HepG2 (cell line): ENCODE measurements at regions of chr11 and their contacts with region 1.

Region 1: DNA sequence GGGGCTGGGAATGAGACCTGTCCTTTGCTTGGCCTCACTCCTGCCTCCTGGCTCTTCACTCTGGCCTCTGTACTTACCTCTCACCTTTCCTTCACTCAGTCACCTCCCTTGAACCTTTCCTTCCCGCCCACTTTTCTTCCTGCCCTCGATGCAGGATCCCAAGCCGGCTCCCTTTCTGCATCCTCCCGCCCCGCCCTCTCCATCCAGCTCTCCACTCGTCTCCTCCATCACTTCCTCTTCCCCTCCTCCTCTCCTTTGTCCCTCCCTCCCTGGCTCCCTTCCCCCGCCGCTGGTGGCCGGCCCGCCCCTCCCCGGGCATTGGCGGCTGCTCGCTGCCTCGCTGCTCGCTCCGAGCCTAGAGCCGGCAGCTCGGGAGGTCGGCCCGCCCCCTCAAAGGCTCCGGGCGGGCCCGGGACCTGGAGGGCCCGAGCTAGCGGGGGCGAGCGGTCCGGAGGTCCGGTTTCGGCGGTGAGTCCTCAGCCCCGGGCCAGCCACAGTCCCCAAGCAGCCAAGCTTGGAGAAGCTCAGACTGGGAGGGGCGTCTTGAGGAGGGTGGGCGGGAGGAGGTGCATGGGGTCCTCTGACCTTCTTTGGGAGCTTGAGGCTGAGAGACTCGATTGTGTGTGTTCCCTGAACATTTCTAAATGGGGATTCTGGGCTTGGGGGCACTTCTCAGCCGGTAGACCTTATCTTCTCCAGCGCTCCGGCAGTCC is 13.8 kb downstream of the PHLDB1 start:
- DNase-seq: peak; percentile 85
- ATAC-seq: peak; percentile 80
- H3K4me3 ChIP-seq: peak overlapping the region; percentile 81 to 97 (median 87)
- H3K27ac ChIP-seq: peak overlapping the region; percentile 95
- H3K4me1 ChIP-seq: peaks cover 57% of the 10 kb centered on the region
- H3K27me3 ChIP-seq: no peaks in the 10 kb centered on the region; a peak in 1 of 5 replicates
- CTCF ChIP-seq: no peak; the same call in 1 of the 2 replicates
- EP300 ChIP-seq: no peak
- POLR2A ChIP-seq: peak in 1 of 2 experiments; percentile 23; a peak in 2 of 4 replicates
- RAD21 ChIP-seq: no peak

Region 2: GRCh38 chr11:117959438-117960149 is 661.6 kb before region 1 on chr11:
- CTCF ChIA-PET with region 1: no interaction called
- POLR2A ChIA-PET with region 1: no interaction called
- in situ Hi-C with region 1: no loop called
- intact Hi-C with region 1: no loop called
- DNase-seq: no peak
- ATAC-seq: no peak
- H3K4me3 ChIP-seq: no peak overlapping the region
- H3K27ac ChIP-seq: no peak overlapping the region
- H3K4me1 ChIP-seq: 0 out of 2 replicates have a peak, but pooled peaks cover 3% of the 10 kb centered on the region
- H3K27me3 ChIP-seq: no peaks in the 10 kb centered on the region
- CTCF ChIP-seq: no peak
- EP300 ChIP-seq: no peak
- POLR2A ChIP-seq: no peak
- RAD21 ChIP-seq: no peak

Region 3: GRCh38 chr11:118572061-118572980 is 48.9 kb before region 1 on chr11 and contains the start of gene ARCN1:
- CTCF ChIA-PET with region 1: no interaction called
- POLR2A ChIA-PET with region 1: interaction called, 17 read pairs
- in situ Hi-C with region 1: no loop called
- intact Hi-C with region 1: no loop called
- DNase-seq: peak; percentile 61
- ATAC-seq: peak; percentile 87
- H3K4me3 ChIP-seq: peak within 1 kb of the TSS; percentile 68 to 97 (median 94)
- H3K27ac ChIP-seq: peak within 1 kb of the TSS; percentile 95
- H3K4me1 ChIP-seq: peaks cover 52% of the 10 kb centered on the region
- H3K27me3 ChIP-seq: no peaks in the 10 kb centered on the region; a peak in 1 of 5 replicates
- CTCF ChIP-seq: peak; percentile 24
- EP300 ChIP-seq: no peak
- POLR2A ChIP-seq: peak; percentile 86 to 92
- RAD21 ChIP-seq: peak; percentile 18; the same call in 1 of the 2 replicates
- total RNA-seq, gene ARCN1: 148 and 215 TPM in 2 replicates

Region 4: DNA sequence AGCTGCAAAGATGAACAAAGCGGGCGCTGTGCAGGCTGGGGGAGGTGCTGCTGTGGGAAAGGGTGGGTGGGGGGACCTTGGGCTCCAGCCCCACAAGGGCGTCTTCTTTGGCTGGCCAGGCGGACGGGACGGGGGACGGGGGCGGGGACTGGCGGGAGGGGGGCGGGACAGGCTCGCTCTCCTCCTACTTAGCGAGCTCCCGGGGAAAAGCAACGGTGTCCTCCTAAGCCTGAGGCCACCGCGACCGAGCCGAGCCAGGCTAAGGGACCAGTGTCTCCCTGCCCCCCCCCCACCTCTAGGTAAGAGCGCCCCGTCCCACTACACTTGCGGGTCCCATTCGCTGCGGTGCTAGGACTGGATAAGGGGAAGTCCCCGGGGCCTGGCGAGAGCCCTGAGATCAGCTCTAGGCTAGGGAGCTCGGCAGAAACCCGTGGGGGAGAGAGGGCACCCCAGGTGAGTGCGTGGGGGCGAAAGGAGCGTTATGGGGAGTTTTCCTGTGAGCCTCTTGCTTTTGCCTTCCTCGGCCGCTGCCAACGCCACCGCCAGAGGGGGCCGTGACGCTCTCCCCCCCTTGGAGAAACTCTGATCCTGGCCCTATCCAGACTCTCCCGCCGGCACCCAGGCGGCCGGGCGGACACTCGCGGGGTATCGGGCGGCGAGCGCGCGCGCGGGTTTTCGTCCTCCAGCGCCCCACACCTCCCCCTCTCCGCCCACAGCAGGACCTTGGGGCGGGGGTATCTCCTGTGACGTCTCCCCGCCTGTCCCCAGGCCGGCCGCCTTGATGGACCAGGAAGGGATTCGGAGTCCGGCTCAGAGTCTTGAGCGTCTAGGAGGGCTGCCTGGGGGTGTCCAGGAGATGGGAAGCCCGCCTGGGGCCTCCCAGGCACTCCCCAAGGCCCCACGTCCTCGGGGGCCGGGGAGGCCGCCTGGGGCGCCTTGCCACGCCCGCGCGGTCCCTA is 13.5 kb before region 1 on chr11 and contains the start of gene PHLDB1:
- CTCF ChIA-PET with region 1: no interaction called
- POLR2A ChIA-PET with region 1: interaction called, 83 read pairs
- in situ Hi-C with region 1: no loop called
- intact Hi-C with region 1: no loop called
- DNase-seq: peak; percentile 45
- ATAC-seq: peak; percentile 68
- H3K4me3 ChIP-seq: peak within 1 kb of the TSS; percentile 65 to 84 (median 81)
- H3K27ac ChIP-seq: no peak within 1 kb of the TSS
- H3K4me1 ChIP-seq: peaks cover 39% of the 10 kb centered on the region
- H3K27me3 ChIP-seq: peaks cover 0 to 6% of the 10 kb centered on the region in 2 experiments; a peak in 1 of 5 replicates
- CTCF ChIP-seq: peak; percentile 72
- EP300 ChIP-seq: no peak
- POLR2A ChIP-seq: no peak
- RAD21 ChIP-seq: no peak
- total RNA-seq, gene PHLDB1: 9.9 and 13.8 TPM in 2 replicates

Region 5: GRCh38 chr11:118634431-118635236 is 13.4 kb after region 1 on chr11:
- CTCF ChIA-PET with region 1: no interaction called
- POLR2A ChIA-PET with region 1: interaction called, 29 read pairs
- in situ Hi-C with region 1: no loop called
- intact Hi-C with region 1: no loop called
- DNase-seq: peak; percentile 41
- ATAC-seq: peak; percentile 88
- H3K4me3 ChIP-seq: peak overlapping the region; percentile 12 to 46 (median 19); a peak in 2 of 6 replicates
- H3K27ac ChIP-seq: no peak overlapping the region
- H3K4me1 ChIP-seq: peaks cover 9% of the 10 kb centered on the region
- H3K27me3 ChIP-seq: no peaks in the 10 kb centered on the region
- CTCF ChIP-seq: peak; percentile 62
- EP300 ChIP-seq: no peak
- POLR2A ChIP-seq: no peak
- RAD21 ChIP-seq: no peak

Region 6: DNA sequence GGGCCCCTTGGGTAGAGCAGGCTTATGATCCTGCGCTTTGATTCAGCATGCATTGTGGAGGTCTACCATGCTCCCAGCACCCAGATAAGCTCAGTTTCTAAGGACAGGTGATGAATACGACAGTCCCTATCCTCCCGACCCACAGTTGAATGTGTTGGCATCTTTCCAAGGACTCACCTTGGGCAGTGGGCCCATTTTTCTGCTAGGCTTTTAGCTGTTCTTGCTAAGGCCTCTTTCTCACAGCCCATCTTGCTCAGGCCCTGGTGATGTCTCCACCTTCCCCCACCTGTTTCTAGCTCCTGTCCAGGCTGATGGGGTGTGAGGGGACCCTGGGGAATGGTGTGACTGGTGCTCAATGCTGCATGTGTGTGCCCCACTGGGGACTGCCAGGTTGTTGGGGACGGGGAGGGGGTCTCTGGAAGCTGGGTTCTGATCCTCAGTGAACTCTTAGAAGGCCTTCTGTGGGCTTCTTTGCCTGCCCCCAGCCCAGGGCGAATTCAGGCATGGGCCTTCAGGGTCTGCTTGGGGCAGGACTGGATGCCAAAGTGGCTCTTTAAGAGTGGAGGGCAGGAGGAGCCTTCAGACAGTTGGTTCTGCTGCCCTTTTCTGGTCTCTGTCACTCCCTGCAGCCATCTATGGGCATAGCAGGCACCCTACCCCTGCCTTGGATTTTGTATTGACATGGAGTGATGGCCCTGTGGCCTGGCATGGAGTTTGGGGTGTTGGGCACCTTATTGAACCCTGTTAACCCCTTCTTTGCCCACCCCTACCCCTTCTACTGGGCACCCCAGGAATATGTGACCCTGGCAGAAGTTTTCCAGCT is 19.3 kb after region 1 on chr11:
- CTCF ChIA-PET with region 1: no interaction called
- POLR2A ChIA-PET with region 1: interaction called, 29 read pairs
- in situ Hi-C with region 1: no loop called
- intact Hi-C with region 1: no loop called
- DNase-seq: no peak
- ATAC-seq: peak; percentile 17; the same call in 2 of the 3 replicates
- H3K4me3 ChIP-seq: no peak overlapping the region
- H3K27ac ChIP-seq: no peak overlapping the region
- H3K4me1 ChIP-seq: no peaks in the 10 kb centered on the region
- H3K27me3 ChIP-seq: no peaks in the 10 kb centered on the region
- CTCF ChIP-seq: peak; percentile 36; the same call in 1 of the 2 replicates
- EP300 ChIP-seq: no peak
- POLR2A ChIP-seq: no peak
- RAD21 ChIP-seq: no peak

Region 7: DNA sequence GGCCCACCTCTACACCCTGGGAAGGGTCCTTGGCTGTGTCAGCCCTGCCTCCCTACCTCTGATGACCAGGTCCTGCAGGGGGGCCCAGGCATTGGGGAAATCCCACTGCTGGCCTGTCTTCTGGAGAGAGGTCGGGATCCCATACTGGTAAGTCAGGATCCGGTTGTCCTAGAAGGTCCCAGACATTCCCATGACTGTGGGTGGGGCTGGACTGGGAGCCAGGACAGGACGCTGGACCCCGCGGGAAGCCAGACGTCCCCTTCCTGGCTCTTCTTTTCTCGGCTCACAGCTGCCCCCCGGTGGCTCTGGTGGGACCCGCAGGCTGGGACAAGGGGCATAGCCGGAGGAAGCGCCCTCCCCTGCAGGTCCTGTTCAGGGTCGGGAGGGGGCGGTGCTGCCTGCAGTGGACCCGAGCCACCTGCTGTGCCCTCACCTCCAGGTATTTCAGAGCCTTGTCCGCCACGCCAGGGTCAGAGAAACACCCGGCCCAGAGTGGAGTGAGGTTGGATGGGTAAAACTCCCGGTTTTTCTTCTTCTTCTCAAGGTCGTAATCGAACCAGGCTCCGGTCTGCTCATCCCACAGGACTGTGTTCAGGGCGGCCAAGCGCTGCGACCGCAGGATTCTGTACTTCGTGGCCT is 38.2 kb after region 1 on chr11:
- CTCF ChIA-PET with region 1: no interaction called
- POLR2A ChIA-PET with region 1: interaction called, 12 read pairs
- in situ Hi-C with region 1: no loop called
- intact Hi-C with region 1: loop called (anchors 5 kb)
- DNase-seq: peak; percentile 82
- ATAC-seq: peak; percentile 90
- H3K4me3 ChIP-seq: peak overlapping the region in 2 of 3 experiments; percentile 25 to 53; a peak in 2 of 6 replicates
- H3K27ac ChIP-seq: no peak overlapping the region
- H3K4me1 ChIP-seq: peaks cover 35% of the 10 kb centered on the region
- H3K27me3 ChIP-seq: no peaks in the 10 kb centered on the region
- CTCF ChIP-seq: peak; percentile 99
- EP300 ChIP-seq: 0 out of 4 replicates have a peak, but pooled peaks of 1 of the 2 experiments have one; percentile 8
- POLR2A ChIP-seq: no peak
- RAD21 ChIP-seq: peak; percentile 97

Region 8: DNA sequence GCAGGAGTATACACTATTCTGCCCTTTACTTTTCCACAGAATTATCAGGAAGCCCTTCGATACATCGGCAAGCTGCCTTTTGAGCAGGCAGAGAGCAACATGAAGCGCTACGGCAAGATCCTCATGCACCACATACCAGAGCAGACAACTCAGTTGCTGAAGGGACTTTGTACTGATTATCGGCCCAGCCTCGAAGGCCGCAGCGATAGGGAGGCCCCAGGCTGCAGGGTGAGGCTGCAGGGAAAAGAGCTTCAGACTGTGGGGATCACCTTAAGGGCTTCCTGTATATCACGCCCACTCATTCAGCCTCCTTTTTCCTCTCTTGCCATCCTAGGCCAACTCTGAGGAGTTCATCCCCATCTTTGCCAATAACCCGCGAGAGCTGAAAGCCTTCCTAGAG is 456.6 kb after region 1 on chr11:
- CTCF ChIA-PET with region 1: no interaction called
- POLR2A ChIA-PET with region 1: no interaction called
- in situ Hi-C with region 1: no loop called
- intact Hi-C with region 1: no loop called
- DNase-seq: no peak
- ATAC-seq: no peak
- H3K4me3 ChIP-seq: no peak overlapping the region
- H3K27ac ChIP-seq: no peak overlapping the region
- H3K4me1 ChIP-seq: no peaks in the 10 kb centered on the region
- H3K27me3 ChIP-seq: no peaks in the 10 kb centered on the region
- CTCF ChIP-seq: no peak
- EP300 ChIP-seq: no peak
- POLR2A ChIP-seq: no peak
- RAD21 ChIP-seq: no peak